Sigmoid colon (tissue), 7 donors: ENCODE measurements at regions of chr3 and their contacts with region 1.

Region 1: DNA sequence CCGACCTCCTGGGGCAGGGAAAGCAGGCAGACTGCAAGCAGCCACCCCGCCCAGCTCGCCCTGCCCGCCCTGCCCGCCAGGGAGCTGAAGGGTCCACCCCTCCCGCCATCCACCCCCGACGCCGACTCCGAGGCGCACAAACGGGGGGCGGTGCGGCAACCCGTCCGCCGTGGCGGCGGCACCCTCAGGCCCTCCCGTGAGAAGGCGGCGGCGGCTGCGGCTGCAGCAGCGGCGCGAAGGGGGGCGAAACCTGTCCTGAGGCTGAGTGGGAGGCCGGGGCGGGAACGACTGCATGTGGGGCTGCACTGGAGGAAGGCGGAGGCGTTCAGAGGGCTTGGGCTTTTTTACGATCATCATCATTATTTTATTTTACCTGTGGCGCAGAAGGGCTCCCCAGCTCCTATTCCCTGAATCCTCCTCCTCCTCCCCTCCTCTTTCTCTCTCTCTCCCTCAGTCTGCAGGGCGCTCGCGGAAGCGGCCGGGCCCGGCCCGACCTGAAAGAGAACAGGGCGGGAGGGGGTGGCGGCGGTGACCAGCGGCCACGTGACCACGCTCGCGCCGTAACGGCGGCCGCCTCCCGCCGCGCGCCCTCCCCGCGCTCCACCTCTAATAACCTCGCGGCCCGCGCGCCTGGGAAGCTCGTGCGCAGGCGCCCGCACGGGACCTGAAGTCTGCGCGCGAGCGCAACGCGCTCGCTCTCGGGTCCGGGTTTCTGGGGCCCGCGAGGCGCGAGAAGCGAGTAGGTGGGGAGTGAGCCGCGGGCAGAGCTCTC is at the start of gene TBC1D5:
- DNase-seq: peak; percentile 99
- H3K4me3 ChIP-seq: peak within 1 kb of the TSS; percentile 76 to 95 (median 94)
- H3K27ac ChIP-seq: peak within 1 kb of the TSS; percentile 97 to 100 (median 98)
- H3K4me1 ChIP-seq: peaks cover 0 to 37% (median 30%) of the 10 kb centered on the region in 4 donors
- H3K27me3 ChIP-seq: no peaks in the 10 kb centered on the region
- CTCF ChIP-seq: peak in 2 of 4 experiments; percentile 5 to 16
- EP300 ChIP-seq: peak in 1 of 4 donors; percentile 35
- POLR2A ChIP-seq: peak; percentile 70 to 71
- total RNA-seq, gene TBC1D5: 43.7 to 82.3 (median 50.8) TPM

Region 2: DNA sequence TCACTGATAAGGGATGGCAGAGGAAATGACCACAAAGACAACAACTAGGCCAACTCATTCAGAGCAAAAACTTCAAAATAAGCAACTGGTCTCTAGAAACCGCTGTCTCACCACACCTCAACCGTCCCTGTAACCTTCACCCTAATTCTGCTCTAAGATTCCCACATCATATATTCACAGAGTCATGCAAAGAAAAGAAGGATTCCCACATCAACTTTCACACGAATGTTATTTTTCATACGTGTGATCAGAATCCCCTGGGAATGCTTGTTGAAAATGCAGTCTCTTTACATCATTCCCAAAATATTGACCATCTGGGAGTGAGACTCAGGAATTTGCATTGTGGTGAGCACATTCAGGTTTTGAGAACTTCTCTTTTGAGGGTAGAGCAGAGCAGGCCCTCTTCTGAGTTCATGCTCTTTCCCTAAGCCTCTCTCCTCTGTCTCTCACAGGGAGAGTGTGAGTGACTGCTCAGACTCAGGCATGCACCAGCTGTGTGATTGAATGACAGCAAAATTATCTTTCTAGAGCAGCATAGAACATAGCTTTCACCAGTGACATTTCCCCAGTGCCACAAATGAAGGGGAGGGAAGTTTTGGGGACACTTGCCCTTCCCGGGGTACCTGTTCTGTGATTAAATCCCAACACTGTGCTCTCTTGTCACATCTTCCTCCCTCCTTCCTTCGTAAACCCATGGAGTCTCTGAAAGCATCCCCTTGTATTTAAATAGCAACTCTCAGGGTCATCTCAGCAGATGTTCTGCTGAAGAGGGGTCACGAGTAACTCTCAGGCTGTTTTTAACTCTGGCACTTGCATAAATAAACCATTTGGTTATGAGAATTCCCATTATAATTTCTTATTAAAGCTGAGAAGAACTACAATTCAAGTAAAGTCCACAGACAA is 686.7 kb before region 1 on chr3:
- intact Hi-C with region 1: no loop called
- DNase-seq: no peak
- H3K4me3 ChIP-seq: no peak overlapping the region
- H3K27ac ChIP-seq: no peak overlapping the region
- H3K4me1 ChIP-seq: no peaks in the 10 kb centered on the region
- H3K27me3 ChIP-seq: no peaks in the 10 kb centered on the region
- CTCF ChIP-seq: no peak
- EP300 ChIP-seq: no peak
- POLR2A ChIP-seq: no peak

Region 3: GRCh38 chr3:17645072-17645698 is 97.1 kb before region 1 on chr3:
- intact Hi-C with region 1: loop called (anchors 2 kb)
- DNase-seq: no peak
- H3K4me3 ChIP-seq: no peak overlapping the region
- H3K27ac ChIP-seq: no peak overlapping the region
- H3K4me1 ChIP-seq: peaks cover 0 to 4% (median 3%) of the 10 kb centered on the region in 4 donors
- H3K27me3 ChIP-seq: no peaks in the 10 kb centered on the region
- CTCF ChIP-seq: peak in 3 of 4 experiments; percentile 50 to 65 (median 51)
- EP300 ChIP-seq: no peak
- POLR2A ChIP-seq: no peak

Region 4: GRCh38 chr3:17841190-17841828 is 99.0 kb after region 1 on chr3:
- intact Hi-C with region 1: no loop called
- DNase-seq: peak; percentile 78
- H3K4me3 ChIP-seq: no peak overlapping the region
- H3K27ac ChIP-seq: no peak overlapping the region
- H3K4me1 ChIP-seq: no peaks in the 10 kb centered on the region
- H3K27me3 ChIP-seq: no peaks in the 10 kb centered on the region
- CTCF ChIP-seq: peak; percentile 69 to 87 (median 78)
- EP300 ChIP-seq: no peak
- POLR2A ChIP-seq: no peak